Vagina (tissue), 2 donors: ENCODE measurements at regions of chr1 and their contacts with region 1.

Region 1: DNA sequence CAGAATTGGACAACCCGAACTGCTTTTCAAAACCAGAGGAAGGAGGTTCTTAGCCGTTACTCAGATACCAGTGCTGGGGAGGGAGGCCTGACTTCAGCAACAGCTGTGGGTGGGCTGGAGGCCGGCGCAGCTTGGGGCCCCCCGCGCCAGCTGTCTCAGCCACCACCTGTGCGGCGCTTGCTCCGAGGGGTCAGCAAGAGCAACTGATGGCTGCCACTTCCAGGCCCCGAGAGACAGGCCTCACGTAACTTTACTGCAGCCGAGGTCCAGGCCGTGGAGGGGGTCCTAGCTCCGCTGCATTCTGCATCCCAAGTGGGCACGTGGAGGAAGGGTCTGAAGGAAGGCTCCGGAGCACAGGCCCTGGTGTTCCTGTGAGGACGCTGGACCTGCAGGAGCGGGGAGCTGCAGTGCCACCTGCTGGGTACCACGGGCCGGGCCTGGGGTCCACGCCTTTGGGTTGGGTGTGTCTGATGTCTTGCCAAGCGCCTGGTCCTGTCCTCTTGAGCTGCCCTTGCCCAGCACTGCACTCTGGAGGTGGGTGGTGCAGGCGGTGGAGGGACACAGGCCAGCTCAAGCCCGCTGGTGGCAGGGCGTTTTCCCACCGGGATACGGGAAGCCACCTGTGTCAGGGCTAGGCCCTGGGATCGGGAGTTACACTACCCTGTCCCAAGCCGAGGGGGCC is 9.8 kb downstream of the THAP3 start:
- DNase-seq: no peak
- H3K4me3 ChIP-seq: no peak overlapping the region
- H3K27ac ChIP-seq: no peak overlapping the region
- H3K4me1 ChIP-seq: peaks cover 11% of the 10 kb centered on the region
- H3K27me3 ChIP-seq: no peaks in the 10 kb centered on the region
- CTCF ChIP-seq: peak in 1 of 3 experiments; percentile 38
- POLR2A ChIP-seq: no peak

Region 2: DNA sequence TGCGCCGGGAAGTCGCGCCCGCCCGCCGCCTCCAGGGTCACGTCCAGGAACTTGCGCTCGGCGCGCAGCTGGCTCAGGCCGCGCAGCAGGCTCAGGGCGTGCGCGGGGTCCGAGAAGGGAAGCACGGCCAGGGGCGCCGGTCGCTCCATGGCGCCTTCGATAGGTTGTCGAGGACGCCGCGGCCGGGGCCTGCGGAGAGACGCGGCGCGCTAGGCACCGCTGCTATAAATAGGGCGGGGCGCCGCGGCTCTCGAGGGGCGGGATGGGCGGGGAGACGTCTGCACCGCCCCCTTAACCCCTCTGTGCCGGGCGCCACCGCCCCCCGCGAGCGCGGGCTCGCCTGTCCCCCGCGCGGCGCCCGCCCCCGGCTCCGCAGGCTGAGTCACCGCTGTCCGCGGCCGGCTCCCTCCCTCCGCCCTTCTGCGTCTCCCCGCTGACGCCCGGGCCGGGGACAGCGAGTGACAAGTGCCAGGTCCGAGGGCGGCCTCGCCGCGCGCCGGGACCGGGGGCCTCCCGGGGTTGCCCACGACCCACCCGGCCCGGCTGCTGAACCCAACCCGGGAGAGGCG is 31.8 kb before region 1 on chr1 and contains the start of gene KLHL21:
- intact Hi-C with region 1: loop called (anchors 5 kb)
- DNase-seq: no peak
- H3K4me3 ChIP-seq: peak within 1 kb of the TSS; percentile 59 to 74
- H3K27ac ChIP-seq: peak within 1 kb of the TSS; percentile 98
- H3K4me1 ChIP-seq: peaks cover 52% of the 10 kb centered on the region
- H3K27me3 ChIP-seq: no peaks in the 10 kb centered on the region
- CTCF ChIP-seq: no peak
- POLR2A ChIP-seq: peak; percentile 4 to 72
- total RNA-seq, gene KLHL21: 54.3 TPM

Region 3: GRCh38 chr1:6969106-6969505 is 334.6 kb after region 1 on chr1:
- intact Hi-C with region 1: no loop called
- DNase-seq: no peak
- H3K4me3 ChIP-seq: no peak overlapping the region
- H3K27ac ChIP-seq: no peak overlapping the region
- H3K4me1 ChIP-seq: no peaks in the 10 kb centered on the region
- H3K27me3 ChIP-seq: no peaks in the 10 kb centered on the region
- CTCF ChIP-seq: no peak
- POLR2A ChIP-seq: no peak